ENCODE measurements at regions of chr11 and their contacts with region 1.

Region 1: DNA sequence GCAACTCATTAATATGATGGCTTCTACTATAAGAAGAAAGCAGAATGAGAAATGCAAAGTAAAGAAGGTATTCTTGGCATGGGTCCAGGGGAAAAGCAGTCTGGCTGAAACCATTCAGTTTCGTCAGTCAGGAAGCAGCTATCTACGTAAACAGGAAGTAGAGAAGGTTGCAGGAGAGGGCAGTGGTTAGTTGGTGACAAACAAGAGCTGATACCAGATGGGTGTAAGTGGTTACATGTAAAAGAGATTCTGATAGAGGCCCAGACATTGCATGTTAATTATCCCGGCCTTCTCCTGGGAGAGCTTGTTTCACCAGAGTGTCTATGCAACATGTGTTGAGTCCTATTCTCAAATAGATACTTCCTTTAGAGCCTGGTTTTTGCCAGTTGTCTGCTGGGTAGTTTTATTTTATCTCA is 58.4 kb upstream of the PSMA1 start:
- DNase-seq: peak; percentile 74
- H3K4me3 Mint-ChIP-seq: peak overlapping the region; percentile 42
- H3K27ac Mint-ChIP-seq: peak overlapping the region; percentile 91
- H3K4me1 Mint-ChIP-seq: peaks cover 43% of the 10 kb centered on the region
- H3K27me3 Mint-ChIP-seq: no peaks in the 10 kb centered on the region

Region 2: DNA sequence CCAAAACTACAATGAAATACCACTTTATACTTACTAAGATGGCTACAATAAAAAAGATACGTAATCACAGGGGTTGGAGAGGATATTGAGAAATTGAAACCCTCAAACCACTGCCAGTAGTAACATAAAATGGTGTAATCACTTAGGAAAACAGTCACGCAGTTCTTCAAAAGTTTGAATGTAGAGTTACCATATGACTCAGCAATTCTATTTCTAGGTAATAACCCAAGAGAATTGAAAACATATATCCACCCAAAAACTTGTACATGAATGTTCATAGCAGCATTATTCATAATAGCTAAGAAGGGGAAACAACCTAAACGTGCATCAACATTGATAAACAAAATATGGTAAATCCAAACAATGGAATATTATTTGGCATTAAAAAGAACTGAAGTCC is 33.9 kb before region 1 on chr11:
- CTCF ChIA-PET with region 1: interaction called, 12 read pairs
- POLR2A ChIA-PET with region 1: interaction called, 18 read pairs
- DNase-seq: no peak
- H3K4me3 Mint-ChIP-seq: no peak overlapping the region
- H3K27ac Mint-ChIP-seq: peak overlapping the region; percentile 79
- H3K4me1 Mint-ChIP-seq: peaks cover 37% of the 10 kb centered on the region
- H3K27me3 Mint-ChIP-seq: no peaks in the 10 kb centered on the region

Region 3: GRCh38 chr11:14566331-14567063 is 12.1 kb before region 1 on chr11:
- CTCF ChIA-PET with region 1: interaction called, 6 read pairs
- POLR2A ChIA-PET with region 1: interaction called, 33 read pairs
- DNase-seq: no peak
- H3K4me3 Mint-ChIP-seq: no peak overlapping the region
- H3K27ac Mint-ChIP-seq: peak overlapping the region; percentile 21
- H3K4me1 Mint-ChIP-seq: peaks cover 55% of the 10 kb centered on the region
- H3K27me3 Mint-ChIP-seq: no peaks in the 10 kb centered on the region

Region 4: GRCh38 chr11:14636119-14636518 is 57.6 kb after region 1 on chr11:
- CTCF ChIA-PET with region 1: interaction called, 5 read pairs
- POLR2A ChIA-PET with region 1: interaction called, 15 read pairs
- DNase-seq: no peak
- H3K4me3 Mint-ChIP-seq: no peak overlapping the region
- H3K27ac Mint-ChIP-seq: peak overlapping the region; percentile 42
- H3K4me1 Mint-ChIP-seq: peaks cover 58% of the 10 kb centered on the region
- H3K27me3 Mint-ChIP-seq: no peaks in the 10 kb centered on the region

Region 5: DNA sequence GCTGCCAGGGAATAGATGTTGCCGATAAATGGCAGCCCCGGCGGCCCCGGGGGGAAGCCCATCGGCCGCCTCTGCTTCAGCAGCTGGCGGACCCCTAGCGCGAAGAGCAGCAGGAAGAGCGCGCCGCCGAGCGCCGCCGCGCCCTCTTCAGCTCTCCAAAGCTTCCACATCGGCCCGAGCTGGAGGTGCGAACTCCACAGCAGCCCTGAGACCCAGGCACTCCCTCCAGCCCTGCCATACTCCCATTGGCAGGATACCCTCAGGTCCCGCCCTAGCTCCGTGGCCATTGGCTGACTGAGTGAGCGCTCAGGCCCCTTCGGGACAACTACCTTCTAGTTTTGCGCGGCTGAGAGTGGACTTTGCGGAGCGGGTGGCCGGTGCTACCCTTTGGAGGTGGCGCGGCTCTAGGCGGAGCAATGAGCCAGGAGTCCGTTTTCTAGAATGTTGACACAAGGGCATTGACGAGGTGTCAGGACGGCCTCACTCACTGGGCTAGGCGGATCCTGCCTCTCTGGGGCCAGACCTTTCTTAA is 313.6 kb after region 1 on chr11 and contains the start of gene CYP2R1:
- CTCF ChIA-PET with region 1: no interaction called
- POLR2A ChIA-PET with region 1: interaction called, 23 read pairs
- DNase-seq: peak; percentile 94
- H3K4me3 Mint-ChIP-seq: peak within 1 kb of the TSS; percentile 90
- H3K27ac Mint-ChIP-seq: peak within 1 kb of the TSS; percentile 95
- H3K4me1 Mint-ChIP-seq: peaks cover 57% of the 10 kb centered on the region
- H3K27me3 Mint-ChIP-seq: no peaks in the 10 kb centered on the region
- total RNA-seq, gene CYP2R1: 22.2 TPM